Common myeloid progenitor, CD34-positive (primary cell): ENCODE measurements at regions of chr15 and their contacts with region 1.

Region 1: DNA sequence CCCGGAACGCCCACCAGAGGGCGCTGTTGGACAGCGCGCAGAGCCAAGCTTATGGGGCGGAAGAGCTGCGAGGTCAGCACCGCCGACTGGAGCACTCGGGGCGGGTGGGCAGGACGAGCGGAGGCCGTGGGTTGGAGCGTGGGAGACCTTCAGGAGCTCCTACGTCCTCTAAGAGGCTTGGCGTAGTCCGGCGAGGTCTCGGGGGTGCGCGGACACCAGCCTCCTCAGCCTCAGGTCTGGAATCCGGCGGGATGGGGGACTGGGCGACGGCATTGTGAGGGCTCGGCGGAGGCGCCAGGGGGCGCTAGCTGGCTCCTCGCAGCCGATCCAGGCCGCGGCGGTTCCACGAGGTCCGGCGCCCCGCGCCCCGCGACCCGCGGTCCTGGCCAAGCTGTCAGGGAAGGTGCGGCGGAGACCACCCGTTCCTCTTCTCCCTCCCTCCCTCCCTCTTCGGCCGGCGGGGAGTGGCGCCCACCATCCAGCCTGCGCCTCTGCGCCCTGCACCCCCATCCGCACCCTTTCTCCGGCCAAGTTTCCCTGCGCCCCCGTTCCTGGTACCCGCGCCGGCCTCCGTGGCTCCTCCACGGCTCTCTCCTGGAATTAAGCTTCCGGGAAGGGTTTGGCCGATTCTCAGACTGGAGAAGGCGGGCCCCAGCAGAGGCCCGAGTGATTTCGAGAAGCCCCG is 24.3 kb upstream of the POLG start:
- DNase-seq: peak; percentile 77 to 87 (median 85)
- H3K4me3 ChIP-seq: peak overlapping the region in 6 of 7 experiments; percentile 38 to 77 (median 62)
- H3K27ac ChIP-seq: no peak overlapping the region
- H3K4me1 ChIP-seq: peaks cover 0 to 34% (median 18%) of the 10 kb centered on the region in 4 experiments
- H3K27me3 ChIP-seq: peaks cover 0 to 97% (median 55%) of the 10 kb centered on the region in 5 experiments

Region 2: GRCh38 chr15:89346516-89347231 is 12.2 kb before region 1 on chr15:
- CTCF ChIA-PET with region 1: interaction called, 36 read pairs
- POLR2A ChIA-PET with region 1: no interaction called
- DNase-seq: peak in 2 of 3 donors; percentile 54 to 64
- H3K4me3 ChIP-seq: no peak overlapping the region
- H3K27ac ChIP-seq: no peak overlapping the region
- H3K4me1 ChIP-seq: no peaks in the 10 kb centered on the region
- H3K27me3 ChIP-seq: peaks cover 2 to 21% (median 15%) of the 10 kb centered on the region in 5 experiments

Region 3: DNA sequence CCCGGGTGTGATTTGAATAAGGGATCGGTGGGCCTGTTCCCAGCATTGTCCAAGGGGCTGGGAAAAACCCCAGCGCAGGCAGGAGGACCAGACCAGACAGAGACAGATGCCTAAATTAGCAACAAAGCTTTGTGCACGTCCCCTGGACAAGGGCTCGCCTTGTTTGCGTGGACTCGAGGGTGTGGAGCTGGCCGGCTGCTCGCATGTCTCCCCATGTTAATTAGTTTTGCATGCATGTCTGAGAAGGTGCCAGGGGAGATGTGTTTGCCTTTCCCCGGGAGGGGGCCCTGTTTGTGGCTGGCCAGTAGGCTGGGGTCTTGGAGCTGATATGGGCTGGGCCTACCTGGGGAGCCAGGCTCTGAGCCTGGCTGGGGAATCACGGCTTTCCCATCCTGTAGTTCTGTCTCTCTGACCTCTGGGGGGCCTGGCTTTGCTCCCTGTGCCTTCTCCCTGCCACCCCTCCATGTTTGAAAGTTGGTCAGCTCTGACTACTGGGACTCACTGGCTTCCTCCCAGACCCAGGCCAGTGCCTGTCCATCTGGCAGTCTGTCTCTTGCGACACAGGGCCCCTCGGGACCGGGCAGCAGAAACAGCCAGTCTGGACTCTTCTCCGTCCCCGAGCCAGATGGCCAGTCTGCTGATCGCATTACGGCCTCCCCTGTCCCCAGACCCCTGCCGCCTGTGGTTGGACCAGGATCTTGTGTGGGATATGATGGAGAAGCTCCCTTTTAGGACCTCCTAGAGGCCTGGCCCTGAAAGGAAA is 31.1 kb after region 1 on chr15:
- CTCF ChIA-PET with region 1: interaction called, 21 read pairs
- POLR2A ChIA-PET with region 1: interaction called, 3 read pairs
- DNase-seq: no peak
- H3K4me3 ChIP-seq: no peak overlapping the region
- H3K27ac ChIP-seq: no peak overlapping the region
- H3K4me1 ChIP-seq: peaks cover 0 to under 1% (median 0%) of the 10 kb centered on the region in 4 experiments
- H3K27me3 ChIP-seq: peaks cover 0 to 37% (median 20%) of the 10 kb centered on the region in 5 experiments

Region 4: DNA sequence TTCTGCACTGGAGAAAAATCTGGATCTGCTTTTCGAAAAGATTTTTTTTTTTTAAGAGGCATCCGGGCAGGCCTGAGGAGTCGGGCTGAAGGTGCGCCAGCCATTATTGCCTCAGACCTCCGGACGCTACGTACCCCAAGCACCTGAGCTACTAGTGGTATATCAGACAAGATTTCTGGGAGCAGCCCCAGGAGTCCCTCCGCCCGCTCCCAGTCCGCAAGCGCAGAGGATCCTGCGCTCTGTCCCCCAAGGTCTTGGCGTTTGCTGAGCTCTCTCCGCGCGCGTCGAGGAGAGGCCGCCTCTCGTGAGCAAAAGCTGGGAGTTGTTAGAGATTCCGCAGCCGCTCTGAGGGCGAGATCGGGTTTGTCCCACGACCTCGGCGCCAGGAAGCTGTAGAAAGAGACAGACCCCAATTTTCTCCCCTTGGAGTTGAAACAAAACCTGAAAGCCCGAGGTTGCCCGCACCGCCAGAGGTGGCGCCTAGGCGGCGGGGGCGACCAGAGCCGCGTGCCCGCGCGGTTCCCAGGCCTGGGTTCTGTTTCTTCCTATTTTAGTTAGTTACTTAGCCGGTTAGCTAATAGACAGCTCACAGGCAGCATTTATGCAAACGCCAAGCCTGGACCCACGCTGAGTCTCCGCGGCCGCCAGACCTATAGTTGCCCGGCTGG is 48.2 kb after region 1 on chr15:
- CTCF ChIA-PET with region 1: interaction called, 22 read pairs
- POLR2A ChIA-PET with region 1: no interaction called
- DNase-seq: peak in 2 of 3 donors; percentile 61 to 67
- H3K4me3 ChIP-seq: peak overlapping the region in 3 of 7 experiments; percentile 19 to 46 (median 33)
- H3K27ac ChIP-seq: no peak overlapping the region
- H3K4me1 ChIP-seq: peaks cover 0 to 50% (median 29%) of the 10 kb centered on the region in 4 experiments
- H3K27me3 ChIP-seq: peaks cover 18 to 100% (median 77%) of the 10 kb centered on the region in 5 experiments

Region 5: DNA sequence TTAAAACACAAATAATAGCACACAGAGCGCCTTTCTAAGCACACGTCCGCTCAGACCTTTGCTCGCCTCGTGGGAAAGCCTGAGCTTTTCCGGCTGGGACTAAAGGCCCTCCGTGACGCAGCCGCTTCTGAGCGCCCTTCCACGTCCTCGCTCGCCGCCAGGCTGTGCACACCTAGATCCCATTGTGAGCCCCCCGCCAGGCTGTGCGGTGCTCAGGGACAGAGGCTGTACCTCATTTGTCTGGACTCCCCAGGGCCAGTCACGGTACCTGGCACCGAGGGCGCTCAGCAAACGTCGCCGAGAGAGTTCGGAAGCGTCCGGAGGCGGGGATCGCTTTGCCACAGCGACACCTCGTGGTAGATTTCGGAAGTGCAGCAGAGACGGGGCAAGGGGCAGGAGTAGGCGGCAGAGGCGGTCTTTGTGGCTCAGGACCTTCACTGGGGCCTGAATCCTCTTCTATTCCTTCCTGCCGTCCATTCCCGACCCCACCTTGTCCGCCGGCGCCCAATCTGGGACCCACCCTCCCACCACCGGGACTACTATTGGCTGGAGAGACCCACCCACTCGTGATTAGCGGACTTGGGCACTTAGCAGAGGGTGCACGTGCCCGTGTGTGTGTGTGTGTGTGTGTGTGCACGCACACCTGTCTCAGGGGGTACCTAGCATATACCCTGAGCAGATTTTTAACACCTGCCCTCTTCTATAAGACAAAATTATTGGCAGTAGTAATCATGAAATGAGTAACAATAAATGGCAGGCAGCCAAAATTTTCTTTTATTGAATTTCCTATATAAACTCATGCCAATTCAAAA is 71.8 kb after region 1 on chr15:
- CTCF ChIA-PET with region 1: interaction called, 105 read pairs
- POLR2A ChIA-PET with region 1: no interaction called
- DNase-seq: peak; percentile 61 to 84 (median 76)
- H3K4me3 ChIP-seq: peak overlapping the region; percentile 11 to 77 (median 59)
- H3K27ac ChIP-seq: no peak overlapping the region
- H3K4me1 ChIP-seq: peaks cover 0 to 7% (median 5%) of the 10 kb centered on the region in 4 experiments
- H3K27me3 ChIP-seq: peaks cover 3 to 46% (median 21%) of the 10 kb centered on the region in 5 experiments